RWPE1 (cell line): ENCODE measurements at regions of chr1 and their contacts with region 1.

Region 1: DNA sequence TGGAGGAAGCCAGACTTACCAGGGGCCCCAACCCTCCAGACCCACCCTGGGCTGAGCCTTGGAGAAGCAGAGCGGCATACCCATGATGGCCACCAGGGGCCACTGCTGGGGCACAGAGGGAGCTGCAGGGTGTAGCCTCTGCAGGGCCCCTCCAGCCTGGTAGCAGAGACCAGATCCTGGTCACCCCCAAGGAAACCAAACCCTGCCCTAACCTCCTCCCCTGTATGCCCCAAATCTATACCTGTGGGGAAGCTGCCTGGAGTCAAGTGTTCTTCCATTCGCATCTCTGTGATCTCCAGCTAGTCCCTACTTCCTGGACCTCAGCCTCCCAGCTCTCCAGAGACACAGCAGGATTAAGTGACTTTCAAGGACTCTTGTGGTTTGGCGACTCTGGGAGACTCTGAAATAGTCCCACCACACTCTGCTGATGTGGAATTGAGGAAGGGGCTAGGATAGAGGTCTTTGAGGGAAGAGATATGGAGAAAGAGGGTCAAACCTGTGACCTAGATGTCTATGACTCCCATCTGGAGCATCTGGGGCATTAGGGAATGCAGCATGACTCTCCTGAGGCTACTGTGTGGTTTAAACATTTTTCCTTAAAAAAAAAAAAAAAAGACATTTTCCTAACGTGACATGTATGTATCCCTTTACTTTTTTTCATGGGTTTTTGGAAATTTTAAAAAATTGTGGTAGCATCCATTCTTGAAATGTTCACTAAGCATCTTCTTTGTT is 119.2 kb upstream of the IPO9 start:
- DNase-seq: peak; percentile 79
- H3K27ac ChIP-seq: peak overlapping the region; percentile 96
- CTCF ChIP-seq: peak; percentile 83

Region 2: DNA sequence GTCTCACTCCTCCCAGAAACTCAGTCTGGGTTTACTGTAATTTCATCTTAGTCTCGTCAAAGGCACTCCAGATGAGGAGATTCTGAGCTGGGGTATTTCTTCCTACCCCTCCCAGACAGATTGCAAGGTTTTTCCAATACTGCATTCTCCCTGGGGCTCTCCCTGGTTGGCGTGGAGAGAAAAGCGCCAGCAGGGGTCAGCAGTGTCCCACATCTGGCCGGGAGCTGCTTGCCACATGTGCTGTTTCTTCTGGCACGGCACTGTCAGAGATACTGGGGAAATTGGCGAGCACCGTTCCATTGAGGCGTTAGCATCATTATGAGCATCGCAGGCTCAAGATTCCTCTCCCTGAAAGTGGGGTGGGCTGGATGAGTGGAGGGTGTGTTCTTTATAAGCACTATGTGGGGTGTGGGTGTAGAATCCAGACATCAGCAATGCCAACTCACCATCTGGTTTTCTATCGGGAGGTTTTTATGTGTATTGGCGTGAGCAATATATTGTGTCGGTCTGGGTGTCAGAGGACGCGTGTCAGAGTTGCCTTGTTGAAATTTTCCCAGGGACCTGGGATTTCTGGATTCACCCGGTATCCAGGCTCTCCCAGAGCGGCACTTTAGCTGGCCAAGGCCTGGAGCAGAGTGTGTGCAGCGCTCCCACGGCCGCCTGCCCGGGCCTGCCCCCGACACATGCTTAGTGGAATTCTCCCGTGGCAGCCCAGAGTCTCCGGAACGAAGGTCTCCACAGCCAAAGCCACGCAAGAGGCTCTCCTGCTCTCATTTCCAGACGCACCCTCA is 178.8 kb before region 1 on chr1:
- CTCF ChIA-PET with region 1: interaction called, 19 read pairs
- POLR2A ChIA-PET with region 1: no interaction called
- DNase-seq: peak; percentile 78
- H3K27ac ChIP-seq: no peak overlapping the region
- CTCF ChIP-seq: peak; percentile 84

Region 3: DNA sequence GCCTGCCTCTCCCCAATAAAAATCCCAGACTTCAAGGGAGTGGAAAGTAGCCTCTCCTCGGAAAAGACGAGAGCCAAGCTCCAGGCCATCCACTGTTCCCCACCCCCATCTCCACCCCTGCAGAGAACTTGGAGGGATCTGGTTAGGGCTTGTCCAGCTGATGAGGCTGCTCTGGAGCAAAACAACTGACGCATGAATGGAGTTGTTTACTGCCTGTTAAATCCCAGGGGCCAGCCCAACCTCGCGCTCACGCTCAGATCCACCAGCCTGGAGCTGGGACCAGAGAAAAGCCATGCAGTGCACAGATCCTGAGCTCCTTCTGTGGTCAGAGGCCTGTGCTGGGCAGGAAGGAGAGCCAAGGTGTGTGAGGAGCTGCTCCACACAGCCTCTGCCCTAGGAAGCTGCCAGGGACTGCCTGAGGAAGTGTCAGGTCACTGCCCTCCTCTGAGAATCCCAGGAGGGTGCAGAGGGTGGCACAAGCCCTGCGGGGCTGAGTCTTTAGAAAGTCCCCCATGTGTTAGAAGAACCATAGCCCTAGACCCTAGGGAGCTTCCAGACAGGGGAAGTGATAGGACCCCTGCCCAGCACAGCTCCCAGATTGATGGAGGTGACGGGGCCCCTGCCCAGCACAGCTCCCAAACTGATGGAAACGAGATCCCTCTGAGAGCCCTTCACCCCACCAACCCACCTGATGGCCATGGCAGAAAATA is 10.2 kb after region 1 on chr1:
- CTCF ChIA-PET with region 1: interaction called, 21 read pairs
- POLR2A ChIA-PET with region 1: no interaction called
- DNase-seq: no peak
- H3K27ac ChIP-seq: peak overlapping the region; percentile 69
- CTCF ChIP-seq: no peak

Region 4: GRCh38 chr1:201774224-201774982 is 64.7 kb after region 1 on chr1:
- CTCF ChIA-PET with region 1: interaction called, 13 read pairs
- POLR2A ChIA-PET with region 1: no interaction called
- DNase-seq: no peak
- H3K27ac ChIP-seq: no peak overlapping the region
- CTCF ChIP-seq: no peak

Region 5: GRCh38 chr1:201783572-201783971 is 73.8 kb after region 1 on chr1:
- CTCF ChIA-PET with region 1: interaction called, 351 read pairs
- POLR2A ChIA-PET with region 1: interaction called, 5 read pairs
- DNase-seq: no peak
- H3K27ac ChIP-seq: peak overlapping the region; percentile 85
- CTCF ChIP-seq: no peak